Lower leg skin (tissue), 4 donors: ENCODE measurements at regions of chr17 and their contacts with region 1.

Region 1: DNA sequence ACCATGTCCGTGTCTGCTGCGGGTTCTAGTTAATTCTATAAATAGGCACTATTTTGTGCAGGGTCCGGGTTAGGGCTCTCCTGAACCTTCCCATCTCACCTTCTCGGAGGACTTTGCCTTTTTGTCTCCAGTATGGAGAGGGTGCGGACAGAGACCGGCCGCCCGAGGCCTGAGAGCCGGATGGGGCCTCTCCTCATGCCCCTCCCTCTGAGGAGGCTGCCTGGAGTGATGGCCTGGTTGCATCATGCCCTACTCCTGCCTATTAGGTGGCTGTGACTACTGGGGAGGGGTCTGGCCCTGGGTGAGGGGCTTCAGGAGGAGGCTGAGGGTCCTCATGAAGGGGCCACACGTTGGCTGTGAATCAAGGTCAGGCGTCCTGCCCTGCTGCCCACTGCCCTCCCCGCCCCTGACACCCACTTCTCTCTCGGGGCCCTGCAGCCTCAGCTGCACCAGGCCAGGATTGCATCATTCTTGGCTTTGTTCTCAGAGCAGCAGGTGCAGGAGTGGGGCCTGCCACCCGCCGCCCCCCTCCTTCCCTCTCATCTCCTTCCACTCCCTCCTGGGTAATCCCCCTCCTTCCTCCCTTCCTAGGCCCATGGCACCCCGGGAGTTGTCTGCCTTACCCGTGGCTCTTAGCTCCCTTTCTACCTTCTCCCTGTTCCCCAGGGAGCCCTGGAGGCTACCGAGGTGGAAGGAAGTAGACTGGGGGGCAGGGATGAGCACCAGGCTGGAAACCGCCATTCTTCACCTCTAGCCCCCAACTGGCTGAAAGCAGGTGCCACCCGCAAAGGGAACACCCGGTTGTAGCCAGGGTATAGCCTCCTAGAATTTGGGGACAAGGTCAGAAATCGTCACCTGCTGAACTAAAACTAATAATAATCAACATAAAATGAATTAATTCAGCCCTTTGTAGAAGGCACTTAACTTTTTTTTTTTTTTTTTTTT is 12.7 kb upstream of the ARHGAP23 start:
- DNase-seq: no peak
- H3K4me3 ChIP-seq: no peak overlapping the region
- CTCF ChIP-seq: no peak
- POLR2A ChIP-seq: no peak

Region 2: DNA sequence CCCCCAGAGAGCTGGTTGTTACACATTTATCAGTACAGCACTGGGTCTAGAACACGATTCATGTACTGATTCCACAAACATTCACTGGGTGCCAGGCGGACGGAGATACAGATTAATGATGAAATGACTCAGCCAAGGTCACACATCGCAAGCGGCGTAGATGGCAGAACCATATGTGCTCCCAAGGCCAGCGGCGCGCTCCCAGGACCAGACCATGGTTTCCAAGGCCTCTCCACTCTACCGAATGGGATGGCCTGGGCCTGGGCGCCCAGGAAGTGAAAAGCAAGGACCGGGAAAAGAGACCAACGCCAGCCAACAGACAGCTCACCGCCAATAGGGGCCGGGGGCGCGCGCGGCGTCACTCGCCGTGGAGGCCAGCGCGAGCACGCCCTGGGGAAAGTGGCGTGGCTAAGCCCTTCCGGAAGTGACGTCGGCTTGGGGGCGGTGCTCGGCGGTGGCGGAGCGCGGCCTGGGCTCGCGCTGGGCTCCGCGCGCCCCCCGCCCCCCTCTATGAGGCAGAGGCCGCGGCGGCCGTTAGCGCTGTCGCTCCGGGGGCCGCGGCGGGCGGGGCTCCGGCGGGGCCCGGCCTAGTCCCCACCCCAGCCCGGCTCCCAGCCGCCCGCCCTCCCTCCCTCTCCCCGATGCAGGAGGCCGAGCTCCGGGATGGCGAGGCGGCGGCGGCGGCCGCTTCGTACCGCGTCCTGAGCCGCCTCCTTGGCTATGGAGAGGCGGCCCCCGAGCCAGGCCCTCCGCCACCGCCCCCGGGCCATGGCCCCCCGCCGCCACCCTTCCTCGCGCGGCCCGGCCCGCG is 63.9 kb before region 1 on chr17 and contains the start of gene SOCS7:
- intact Hi-C with region 1: loop called (anchors 2 kb)
- DNase-seq: peak; percentile 78 to 98
- H3K4me3 ChIP-seq: peak within 1 kb of the TSS; percentile 78
- CTCF ChIP-seq: no peak
- POLR2A ChIP-seq: no peak
- total RNA-seq, gene SOCS7: 14.5 to 19.9 (median 19.3) TPM